ENCODE measurements at regions of chr4 and their contacts with region 1.

Region 1: DNA sequence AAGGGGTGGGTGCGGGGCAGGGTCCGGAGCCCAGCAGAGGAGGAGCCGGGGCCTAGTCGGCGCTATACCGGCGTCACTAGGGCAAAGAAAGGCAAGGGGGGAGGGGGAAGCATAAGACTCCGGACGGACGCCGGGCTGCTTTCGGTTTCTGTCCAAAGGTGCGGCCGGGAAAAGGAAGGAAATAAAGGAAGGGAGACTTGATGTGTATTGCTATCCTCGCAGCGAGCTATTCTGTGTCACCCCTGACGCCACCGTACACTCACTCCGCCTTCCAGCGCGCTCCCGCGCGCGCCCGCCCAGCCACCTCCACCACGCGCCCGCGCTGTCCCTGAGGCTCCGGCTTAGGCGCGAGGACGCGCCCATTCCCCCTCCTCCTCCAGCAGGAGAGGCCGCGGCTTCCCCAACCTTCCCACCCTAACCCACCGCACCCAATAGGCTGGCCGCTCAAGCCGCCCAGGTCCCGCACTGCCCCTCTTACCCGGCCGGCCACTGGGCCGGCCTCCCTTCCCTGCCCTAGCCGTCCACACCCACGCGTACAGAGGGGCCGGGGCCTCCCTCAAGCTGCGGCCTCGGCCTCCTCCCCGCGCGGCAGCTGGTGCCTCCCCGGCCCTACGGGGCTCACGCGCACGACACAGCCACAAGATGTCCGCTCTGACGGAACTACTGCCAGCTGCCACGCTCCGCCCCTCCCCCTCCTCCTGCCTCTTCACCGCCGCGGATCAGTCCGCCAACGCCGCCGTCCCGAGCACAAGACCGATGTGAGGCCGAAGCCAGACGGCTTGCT is at the start of gene UBE2D3:
- DNase-seq: peak; percentile 96
- ATAC-seq: peak; percentile 76
- total RNA-seq, gene UBE2D3: 261 TPM

Region 2: DNA sequence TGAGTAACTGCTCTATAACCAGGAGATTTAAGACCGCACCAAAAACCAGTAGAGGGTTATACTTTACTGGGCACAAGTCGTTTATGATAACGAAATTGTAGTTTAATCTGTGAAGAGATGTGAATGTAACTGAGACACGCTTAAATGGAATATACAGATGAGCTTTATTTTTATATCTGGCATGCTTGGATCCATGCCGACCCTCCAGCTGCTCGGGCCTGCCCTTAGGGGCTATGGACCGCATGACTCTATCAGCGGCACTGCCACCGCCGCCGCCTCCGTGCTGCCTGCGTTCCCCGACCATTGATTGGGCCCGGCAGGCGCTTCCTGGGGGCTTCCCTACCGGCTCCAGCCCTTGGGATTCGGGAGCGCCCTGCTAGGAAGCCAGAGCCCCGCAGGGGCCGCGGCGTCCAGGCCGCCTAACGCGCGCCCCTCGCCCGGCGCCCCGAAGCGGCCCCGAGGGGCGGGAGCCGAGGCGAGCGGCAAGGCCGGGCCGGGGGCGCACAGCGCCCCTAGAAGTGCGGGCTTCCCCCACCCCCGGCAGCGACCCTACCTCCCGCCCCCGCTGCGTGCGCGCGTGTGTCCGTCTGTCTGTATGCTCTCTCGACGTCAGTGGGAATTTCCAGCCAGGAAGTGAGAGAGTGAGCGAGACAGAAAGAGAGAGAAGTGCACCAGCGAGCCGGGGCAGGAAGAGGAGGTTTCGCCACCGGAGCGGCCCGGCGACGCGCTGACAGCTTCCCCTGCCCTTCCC is 326.2 kb before region 1 on chr4 and contains the start of gene NFKB1:
- intact Hi-C with region 1: loop called (anchors 1 kb)
- DNase-seq: peak; percentile 90
- ATAC-seq: peak; percentile 65
- total RNA-seq, gene NFKB1: 20.6 TPM

Region 3: GRCh38 chr4:102687373-102687981 is 139.6 kb before region 1 on chr4:
- intact Hi-C with region 1: no loop called
- DNase-seq: no peak
- ATAC-seq: no peak

Region 4: GRCh38 chr4:102760645-102761295 is 66.3 kb before region 1 on chr4 and contains the start of gene MANBA:
- intact Hi-C with region 1: loop called (anchors 2 kb)
- DNase-seq: peak; percentile 95
- ATAC-seq: peak; percentile 98
- total RNA-seq, gene MANBA: 24.8 TPM

Region 5: DNA sequence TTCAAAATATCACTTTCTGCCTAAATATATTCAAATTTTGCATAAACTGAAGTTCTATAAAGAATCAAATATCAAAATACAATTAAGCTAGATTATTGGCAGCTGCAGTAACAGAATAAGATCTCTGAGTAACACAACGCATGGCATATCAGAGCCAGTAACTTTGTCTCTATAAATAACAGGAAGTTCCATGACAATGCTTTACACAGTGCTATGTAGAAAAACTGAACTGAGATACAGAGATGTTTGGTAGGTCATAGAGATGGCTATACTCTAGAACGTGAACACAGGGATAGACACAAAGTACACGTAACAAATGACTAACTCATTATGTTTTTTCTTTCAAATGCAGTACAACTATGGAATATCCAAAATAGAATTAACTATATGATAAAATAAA is 17.9 kb before region 1 on chr4:
- intact Hi-C with region 1: loop called (anchors 2 kb)
- DNase-seq: no peak
- ATAC-seq: peak; percentile 85

Region 6: DNA sequence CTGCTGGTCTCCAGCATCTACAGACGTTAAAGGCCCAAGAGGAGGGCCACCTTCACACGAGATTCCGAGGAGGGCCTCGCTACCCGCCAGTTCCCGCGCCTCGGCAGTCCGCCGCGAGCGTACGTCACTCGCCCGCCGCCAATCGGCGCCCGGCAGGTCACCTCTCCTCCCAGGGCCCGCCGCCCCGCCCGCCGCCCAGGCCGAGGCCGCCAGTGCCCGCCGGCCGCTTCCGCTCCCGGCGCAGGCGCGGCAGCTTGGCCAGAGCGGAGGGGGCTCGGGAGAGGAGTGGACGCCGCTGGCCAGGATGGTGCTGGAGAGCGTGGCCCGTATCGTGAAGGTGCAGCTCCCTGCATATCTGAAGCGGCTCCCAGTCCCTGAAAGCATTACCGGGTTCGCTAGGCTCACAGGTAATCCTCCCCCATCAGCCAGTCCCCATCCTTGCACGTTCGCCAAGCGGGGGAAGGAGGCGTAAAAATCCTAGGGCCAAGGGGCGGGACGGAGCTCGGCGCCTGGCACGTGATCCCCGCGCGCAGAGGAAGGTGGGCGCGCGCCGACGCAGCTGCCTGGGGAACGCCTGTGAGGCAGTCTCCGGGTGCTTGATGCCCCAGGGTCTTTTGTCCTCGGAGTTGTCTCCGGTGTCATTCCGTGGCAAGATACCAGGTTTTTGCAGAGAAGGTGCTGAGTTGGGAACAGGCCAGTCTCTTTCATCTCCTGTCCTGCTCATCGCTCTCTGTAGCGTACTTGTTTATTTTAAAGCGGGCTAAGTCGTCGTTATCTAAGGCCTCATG is 41.9 kb after region 1 on chr4 and contains the start of gene CISD2:
- intact Hi-C with region 1: loop called (anchors 1 kb)
- DNase-seq: peak; percentile 96
- ATAC-seq: peak; percentile 99
- total RNA-seq, gene CISD2: 17.1 TPM

Region 7: GRCh38 chr4:103019308-103020124 is 192.4 kb after region 1 on chr4 and contains the start of gene SLC9B1:
- intact Hi-C with region 1: loop called (anchors 2 kb)
- DNase-seq: peak; percentile 98
- ATAC-seq: peak; percentile 99
- total RNA-seq, gene SLC9B1: 0.95 TPM

Region 8: DNA sequence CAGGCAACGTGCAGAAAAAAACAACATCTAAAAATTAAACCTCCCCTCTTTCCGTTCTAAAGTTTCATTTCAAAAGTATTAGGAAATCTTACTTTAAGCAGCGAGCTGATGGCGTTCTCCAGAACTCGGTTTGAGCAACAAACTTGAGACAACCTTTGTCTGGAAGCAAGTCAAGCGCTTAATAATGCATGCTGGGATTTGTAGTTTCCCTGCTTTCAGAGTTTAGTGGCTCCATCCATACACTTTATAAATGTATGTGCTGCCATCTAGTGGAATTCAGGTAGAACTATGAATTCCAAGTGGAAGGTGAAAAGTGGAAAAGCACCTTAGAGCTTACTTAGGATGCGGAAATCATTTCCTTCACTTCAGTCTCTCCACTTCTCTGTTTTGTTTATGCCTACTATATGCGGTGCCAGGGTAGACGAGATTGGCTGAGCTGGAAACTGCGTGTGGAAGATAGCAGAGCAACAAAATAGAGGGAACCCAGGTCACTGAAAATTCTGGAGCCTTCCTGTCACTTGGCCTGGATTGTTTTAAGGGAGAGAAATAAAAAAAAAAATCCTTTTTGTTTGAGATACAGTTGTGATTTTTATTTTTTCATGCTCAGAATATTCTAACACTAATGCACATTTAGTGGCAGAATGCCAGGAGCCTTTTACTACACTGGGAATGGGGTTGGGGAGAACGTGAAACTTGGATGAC is 272.8 kb after region 1 on chr4 and contains the start of gene BDH2:
- intact Hi-C with region 1: loop called (anchors 5 kb)
- DNase-seq: no peak
- ATAC-seq: peak; percentile 95
- total RNA-seq, gene BDH2: 25.4 TPM